Endothelial cell of umbilical vein (primary cell): ENCODE measurements at regions of chr9 and their contacts with region 1.

Region 1: GRCh38 chr9:111805830-111806241 is 11.1 kb upstream of the SHOC1 start:
- DNase-seq: peak; percentile 92
- H3K4me3 ChIP-seq: no peak overlapping the region
- H3K27ac ChIP-seq: peak overlapping the region; percentile 84
- H3K4me1 ChIP-seq: peaks cover 24% of the 10 kb centered on the region
- H3K27me3 ChIP-seq: no peaks in the 10 kb centered on the region
- CTCF ChIP-seq: no peak
- POLR2A ChIP-seq: no peak

Region 2: DNA sequence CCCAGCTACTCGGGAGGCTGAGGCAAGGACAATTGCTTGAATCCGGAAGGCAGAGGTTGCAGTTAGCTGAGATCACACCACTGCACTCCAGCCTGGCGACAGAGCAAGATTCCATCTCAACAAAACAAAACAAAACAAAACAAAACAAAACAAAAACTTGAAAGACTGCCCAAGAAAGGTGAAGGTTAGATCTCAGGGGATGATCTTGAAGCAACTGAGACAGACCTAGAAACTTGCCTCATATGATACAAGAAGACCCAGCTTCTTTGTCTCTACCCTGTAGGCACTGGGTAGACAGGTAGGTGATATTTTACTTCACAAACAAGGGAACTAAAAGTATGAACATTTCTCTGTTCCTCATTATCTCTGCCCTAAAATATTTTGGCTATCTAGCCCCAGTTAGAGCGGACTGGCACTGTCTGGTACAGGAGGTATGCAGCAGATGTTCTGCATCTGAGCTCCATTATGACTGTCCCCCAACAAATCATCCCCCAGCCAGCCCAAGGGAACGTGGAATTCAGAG is 15.2 kb after region 1 on chr9:
- CTCF ChIA-PET with region 1: no interaction called
- POLR2A ChIA-PET with region 1: no interaction called
- dilution Hi-C with region 1: no loop called
- intact Hi-C with region 1: no loop called
- DNase-seq: no peak
- H3K4me3 ChIP-seq: no peak overlapping the region
- H3K27ac ChIP-seq: no peak overlapping the region
- H3K4me1 ChIP-seq: no peaks in the 10 kb centered on the region
- H3K27me3 ChIP-seq: no peaks in the 10 kb centered on the region
- CTCF ChIP-seq: no peak
- POLR2A ChIP-seq: no peak

Region 3: GRCh38 chr9:111866976-111867375 is 61.1 kb after region 1 on chr9:
- CTCF ChIA-PET with region 1: no interaction called
- POLR2A ChIA-PET with region 1: no interaction called
- dilution Hi-C with region 1: no loop called
- intact Hi-C with region 1: loop called (anchors 2 kb)
- DNase-seq: peak; percentile 59
- H3K4me3 ChIP-seq: no peak overlapping the region
- H3K27ac ChIP-seq: no peak overlapping the region
- H3K4me1 ChIP-seq: peaks cover 12% of the 10 kb centered on the region
- H3K27me3 ChIP-seq: no peaks in the 10 kb centered on the region
- CTCF ChIP-seq: no peak
- POLR2A ChIP-seq: no peak